Activated B cell treated with CpG ODN at 0.5 μM for 24 hours (primary cell): ENCODE measurements at regions of chr3 and their contacts with region 1.

Region 1: GRCh38 chr3:136698361-136698760 is 53.8 kb downstream of the STAG1 start:
- DNase-seq: no peak
- ATAC-seq: no peak
- H3K4me3 Mint-ChIP-seq: no peak overlapping the region
- H3K27ac Mint-ChIP-seq: no peak overlapping the region
- H3K4me1 Mint-ChIP-seq: peaks cover 47% of the 10 kb centered on the region
- H3K27me3 Mint-ChIP-seq: no peaks in the 10 kb centered on the region
- CTCF ChIP-seq: no peak

Region 2: DNA sequence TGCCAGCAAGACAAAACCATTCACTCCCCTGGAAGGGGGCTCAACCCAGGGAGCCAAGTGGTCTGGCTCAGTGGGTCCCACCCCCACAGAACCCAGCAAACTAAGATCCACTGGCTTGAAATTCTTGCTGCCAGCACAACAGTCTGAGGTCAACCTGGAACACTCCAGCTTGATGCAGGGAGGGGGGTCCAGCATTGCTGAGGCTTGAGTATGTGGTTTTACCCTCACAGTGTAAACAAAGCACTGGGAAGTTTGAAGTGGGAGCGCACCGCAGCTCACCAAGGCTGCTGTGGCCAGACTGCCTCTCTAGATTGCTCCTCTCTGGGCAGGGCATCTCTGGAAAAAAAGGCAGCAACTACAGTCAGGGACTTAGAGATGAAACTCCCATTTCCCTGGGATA is 583.9 kb before region 1 on chr3:
- CTCF ChIA-PET with region 1: no interaction called
- POLR2A ChIA-PET with region 1: no interaction called
- intact Hi-C with region 1: no loop called
- DNase-seq: no peak
- ATAC-seq: no peak
- H3K4me3 Mint-ChIP-seq: no peak overlapping the region
- H3K27ac Mint-ChIP-seq: no peak overlapping the region
- H3K4me1 Mint-ChIP-seq: peaks cover 5% of the 10 kb centered on the region
- H3K27me3 Mint-ChIP-seq: peaks cover 14% of the 10 kb centered on the region
- CTCF ChIP-seq: no peak

Region 3: DNA sequence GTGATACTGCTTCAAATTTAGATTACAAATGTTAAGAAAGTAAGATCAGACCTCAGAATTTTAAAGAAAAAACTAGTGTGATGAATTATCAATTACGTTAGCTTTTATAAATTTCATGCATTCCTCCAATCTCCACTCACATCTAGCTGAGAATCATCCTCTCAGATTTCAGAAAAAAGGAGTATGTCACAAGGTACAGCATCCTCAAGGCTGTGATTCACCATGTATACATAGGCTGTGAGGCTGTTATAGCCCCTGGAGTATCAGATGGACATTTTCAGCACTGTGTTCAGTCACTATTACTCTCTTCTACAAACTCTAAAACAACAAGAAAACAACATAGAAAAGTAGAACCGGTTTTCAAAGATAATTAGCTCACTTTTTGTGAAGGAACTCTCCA is 233.9 kb before region 1 on chr3:
- CTCF ChIA-PET with region 1: no interaction called
- POLR2A ChIA-PET with region 1: no interaction called
- intact Hi-C with region 1: no loop called
- DNase-seq: no peak
- ATAC-seq: no peak
- H3K4me3 Mint-ChIP-seq: no peak overlapping the region
- H3K27ac Mint-ChIP-seq: no peak overlapping the region
- H3K4me1 Mint-ChIP-seq: no peaks in the 10 kb centered on the region
- H3K27me3 Mint-ChIP-seq: no peaks in the 10 kb centered on the region
- CTCF ChIP-seq: no peak

Region 4: DNA sequence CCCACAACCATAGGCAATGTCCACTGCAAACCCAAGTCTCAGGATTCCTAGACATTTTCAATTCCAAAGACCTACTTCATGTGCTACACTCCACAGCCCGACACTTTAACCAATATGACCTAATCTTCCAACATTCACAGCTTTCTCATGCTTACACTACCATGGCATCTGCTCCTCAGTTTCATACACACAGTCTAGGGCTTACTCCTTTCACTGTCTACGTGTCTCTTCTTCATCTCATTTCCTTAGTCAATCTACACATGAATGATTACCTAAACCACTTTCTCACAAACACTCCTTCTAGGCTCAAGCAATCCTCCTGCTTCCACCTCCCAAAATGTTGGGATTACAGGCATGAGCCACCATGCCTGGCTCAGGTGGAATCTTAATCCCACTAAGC is 52.4 kb before region 1 on chr3:
- CTCF ChIA-PET with region 1: no interaction called
- POLR2A ChIA-PET with region 1: no interaction called
- intact Hi-C with region 1: no loop called
- DNase-seq: no peak
- ATAC-seq: no peak
- H3K4me3 Mint-ChIP-seq: no peak overlapping the region
- H3K27ac Mint-ChIP-seq: no peak overlapping the region
- H3K4me1 Mint-ChIP-seq: peaks cover 48% of the 10 kb centered on the region
- H3K27me3 Mint-ChIP-seq: no peaks in the 10 kb centered on the region
- CTCF ChIP-seq: no peak

Region 5: GRCh38 chr3:136685882-136686281 is 12.5 kb before region 1 on chr3:
- CTCF ChIA-PET with region 1: interaction called, 3 read pairs
- POLR2A ChIA-PET with region 1: no interaction called
- intact Hi-C with region 1: loop called (anchors 2 kb)
- DNase-seq: no peak
- ATAC-seq: no peak
- H3K4me3 Mint-ChIP-seq: no peak overlapping the region
- H3K27ac Mint-ChIP-seq: no peak overlapping the region
- H3K4me1 Mint-ChIP-seq: peaks cover 42% of the 10 kb centered on the region
- H3K27me3 Mint-ChIP-seq: no peaks in the 10 kb centered on the region
- CTCF ChIP-seq: no peak

Region 6: GRCh38 chr3:137764001-137764433 is 1065.7 kb after region 1 on chr3 and contains the start of gene SOX14:
- CTCF ChIA-PET with region 1: no interaction called
- POLR2A ChIA-PET with region 1: no interaction called
- intact Hi-C with region 1: no loop called
- DNase-seq: no peak
- ATAC-seq: no peak
- H3K4me3 Mint-ChIP-seq: no peak within 1 kb of the TSS
- H3K27ac Mint-ChIP-seq: no peak within 1 kb of the TSS
- H3K4me1 Mint-ChIP-seq: no peaks in the 10 kb centered on the region
- H3K27me3 Mint-ChIP-seq: peaks cover 67% of the 10 kb centered on the region
- CTCF ChIP-seq: no peak
- total RNA-seq, gene SOX14: not detected in 2 replicates